CD8-positive, alpha-beta T cell (primary cell): ENCODE measurements at regions of chr13 and their contacts with region 1.

Region 1: GRCh38 chr13:24627099-24627714 is 53.0 kb upstream of the ATP12A start:
- DNase-seq: no peak
- ATAC-seq: no peak
- H3K4me3 ChIP-seq: no peak overlapping the region
- H3K4me3 Mint-ChIP-seq: no peak overlapping the region
- H3K27ac ChIP-seq: peak overlapping the region in 1 of 2 experiments; percentile 78
- H3K27ac Mint-ChIP-seq: no peak overlapping the region
- H3K4me1 ChIP-seq: peaks cover 25% of the 10 kb centered on the region
- H3K4me1 Mint-ChIP-seq: peaks cover 35% of the 10 kb centered on the region
- H3K27me3 ChIP-seq: no peaks in the 10 kb centered on the region
- H3K27me3 Mint-ChIP-seq: no peaks in the 10 kb centered on the region
- CTCF ChIP-seq: no peak

Region 2: DNA sequence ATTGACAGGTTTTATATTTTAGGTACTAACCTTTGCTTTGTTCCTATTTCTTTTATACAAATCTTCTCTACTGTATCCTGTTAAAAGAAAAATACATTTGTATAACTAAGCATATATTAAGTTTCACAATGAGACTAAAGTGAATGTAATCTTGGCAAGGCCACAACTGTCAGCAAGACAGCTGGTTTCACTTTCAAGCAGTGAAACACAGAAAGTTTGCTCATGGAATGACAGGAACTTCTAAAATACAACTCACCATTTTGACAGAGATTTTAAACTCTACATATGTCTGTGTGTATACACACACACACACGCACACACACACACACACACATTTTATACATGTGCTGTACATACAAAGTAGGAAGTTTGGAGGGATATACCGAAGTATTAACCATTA is 168.0 kb before region 1 on chr13:
- CTCF ChIA-PET with region 1: no interaction called
- POLR2A ChIA-PET with region 1: no interaction called
- intact Hi-C with region 1: no loop called
- DNase-seq: no peak
- ATAC-seq: no peak
- H3K4me3 ChIP-seq: no peak overlapping the region
- H3K4me3 Mint-ChIP-seq: no peak overlapping the region
- H3K27ac ChIP-seq: no peak overlapping the region
- H3K27ac Mint-ChIP-seq: no peak overlapping the region
- H3K4me1 ChIP-seq: no peaks in the 10 kb centered on the region
- H3K4me1 Mint-ChIP-seq: peaks cover 18% of the 10 kb centered on the region
- H3K27me3 ChIP-seq: no peaks in the 10 kb centered on the region
- H3K27me3 Mint-ChIP-seq: no peaks in the 10 kb centered on the region
- CTCF ChIP-seq: no peak

Region 3: GRCh38 chr13:24528816-24529398 is 98.3 kb before region 1 on chr13:
- CTCF ChIA-PET with region 1: no interaction called
- POLR2A ChIA-PET with region 1: no interaction called
- intact Hi-C with region 1: no loop called
- DNase-seq: no peak
- ATAC-seq: no peak
- H3K4me3 ChIP-seq: no peak overlapping the region
- H3K4me3 Mint-ChIP-seq: no peak overlapping the region
- H3K27ac ChIP-seq: no peak overlapping the region
- H3K27ac Mint-ChIP-seq: no peak overlapping the region
- H3K4me1 ChIP-seq: no peaks in the 10 kb centered on the region
- H3K4me1 Mint-ChIP-seq: no peaks in the 10 kb centered on the region
- H3K27me3 ChIP-seq: peaks cover 0 to 3% of the 10 kb centered on the region in 2 experiments
- H3K27me3 Mint-ChIP-seq: peaks cover 26% of the 10 kb centered on the region
- CTCF ChIP-seq: no peak

Region 4: DNA sequence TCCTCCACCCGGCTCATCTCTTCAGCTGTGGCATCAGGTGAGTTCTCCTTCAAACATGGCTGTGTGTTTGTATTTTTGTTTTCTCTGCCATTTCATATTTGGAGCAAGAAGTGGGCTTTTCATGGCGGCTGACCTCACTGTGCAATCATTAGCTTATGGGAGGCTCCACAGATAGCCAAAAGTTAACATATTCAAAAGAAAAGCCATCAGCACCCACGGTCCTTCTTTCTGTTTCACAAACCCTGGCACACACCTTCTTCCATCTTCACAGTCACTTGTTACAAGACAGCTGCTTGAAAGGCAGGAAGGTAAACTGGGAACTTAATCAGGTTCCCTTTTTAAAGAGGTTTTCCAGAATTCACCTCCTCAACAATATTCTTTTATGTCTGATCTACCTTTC is 16.3 kb before region 1 on chr13:
- CTCF ChIA-PET with region 1: interaction called, 14 read pairs
- POLR2A ChIA-PET with region 1: no interaction called
- intact Hi-C with region 1: loop called in 1 of 2 experiments (anchors 2 kb)
- DNase-seq: no peak
- ATAC-seq: no peak
- H3K4me3 ChIP-seq: no peak overlapping the region
- H3K4me3 Mint-ChIP-seq: no peak overlapping the region
- H3K27ac ChIP-seq: no peak overlapping the region
- H3K27ac Mint-ChIP-seq: no peak overlapping the region
- H3K4me1 ChIP-seq: peaks cover 4% of the 10 kb centered on the region
- H3K4me1 Mint-ChIP-seq: peaks cover 15% of the 10 kb centered on the region
- H3K27me3 ChIP-seq: no peaks in the 10 kb centered on the region
- H3K27me3 Mint-ChIP-seq: no peaks in the 10 kb centered on the region
- CTCF ChIP-seq: no peak